Head of caudate nucleus (tissue), 42 donors: ENCODE measurements at regions of chr1 and their contacts with region 1.

Region 1: GRCh38 chr1:92858564-92859399 is 26.9 kb downstream of the RPL5 start:
- DNase-seq: peak in 30 of 42 donors; percentile 27 to 90 (median 72)

Region 2: DNA sequence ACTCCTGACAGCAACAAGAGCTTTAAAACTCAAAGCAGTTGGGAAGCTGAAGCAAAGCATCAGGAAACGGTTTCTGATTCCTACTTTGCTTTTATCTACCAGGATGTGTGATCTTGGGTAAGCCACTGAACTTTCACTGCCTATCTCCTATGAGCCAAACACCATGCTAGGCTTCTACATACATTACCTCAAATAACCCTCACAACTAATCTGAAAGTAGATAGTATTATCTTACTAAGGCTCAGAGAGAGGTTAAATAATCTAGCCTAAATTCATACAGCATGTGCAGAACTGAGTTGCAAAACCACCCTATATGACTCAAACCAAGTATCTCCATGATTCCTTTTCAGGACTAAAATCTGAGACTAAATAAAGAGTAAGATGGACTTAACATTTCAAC is 157.6 kb before region 1 on chr1:
- intact Hi-C with region 1: no loop called
- DNase-seq: no peak

Region 3: GRCh38 chr1:92736395-92736794 is 122.4 kb before region 1 on chr1:
- intact Hi-C with region 1: no loop called
- DNase-seq: no peak

Region 4: DNA sequence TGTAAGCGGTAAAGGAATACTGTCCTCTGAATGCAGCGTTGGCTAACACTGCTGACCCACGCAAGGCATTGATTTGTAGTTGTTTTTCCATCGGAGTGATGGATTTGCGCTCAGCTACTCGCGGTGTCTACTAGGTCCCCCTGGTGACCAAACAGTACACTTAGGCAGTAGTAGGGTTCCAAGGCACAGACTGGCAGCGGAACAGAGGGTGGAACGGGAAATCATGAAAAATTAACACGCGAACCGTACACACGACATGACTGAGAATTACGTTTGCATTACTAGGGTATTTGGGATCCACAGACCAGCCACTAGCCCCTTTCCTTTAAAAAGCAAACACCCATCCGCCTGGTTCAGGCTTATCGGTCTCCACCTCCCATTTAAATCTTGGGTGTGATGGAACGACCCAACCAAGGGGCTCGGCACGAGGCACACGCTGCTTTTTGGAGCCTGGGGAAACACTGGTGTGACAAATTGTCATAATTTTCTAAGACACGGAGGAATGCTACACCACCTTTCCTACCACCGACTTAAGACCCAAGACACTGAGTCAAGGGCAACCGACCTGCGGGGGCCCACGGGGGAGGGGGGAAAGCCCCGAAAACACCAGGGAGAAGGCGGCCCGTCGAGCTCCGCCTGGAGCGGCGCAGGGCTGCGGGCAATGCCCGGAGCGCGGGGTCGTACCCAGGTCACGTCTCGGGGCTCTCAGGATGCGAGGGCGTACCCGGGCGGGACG is 101.8 kb after region 1 on chr1:
- intact Hi-C with region 1: loop called (anchors 1 kb)
- DNase-seq: peak; percentile 45 to 91 (median 80)

Region 5: GRCh38 chr1:92994105-92994712 is 135.4 kb after region 1 on chr1:
- intact Hi-C with region 1: loop called (anchors 2 kb)
- DNase-seq: peak in 40 of 42 donors; percentile 24 to 94 (median 76)